H1 (cell line): ENCODE measurements at regions of chr16 and their contacts with region 1.

Region 1: DNA sequence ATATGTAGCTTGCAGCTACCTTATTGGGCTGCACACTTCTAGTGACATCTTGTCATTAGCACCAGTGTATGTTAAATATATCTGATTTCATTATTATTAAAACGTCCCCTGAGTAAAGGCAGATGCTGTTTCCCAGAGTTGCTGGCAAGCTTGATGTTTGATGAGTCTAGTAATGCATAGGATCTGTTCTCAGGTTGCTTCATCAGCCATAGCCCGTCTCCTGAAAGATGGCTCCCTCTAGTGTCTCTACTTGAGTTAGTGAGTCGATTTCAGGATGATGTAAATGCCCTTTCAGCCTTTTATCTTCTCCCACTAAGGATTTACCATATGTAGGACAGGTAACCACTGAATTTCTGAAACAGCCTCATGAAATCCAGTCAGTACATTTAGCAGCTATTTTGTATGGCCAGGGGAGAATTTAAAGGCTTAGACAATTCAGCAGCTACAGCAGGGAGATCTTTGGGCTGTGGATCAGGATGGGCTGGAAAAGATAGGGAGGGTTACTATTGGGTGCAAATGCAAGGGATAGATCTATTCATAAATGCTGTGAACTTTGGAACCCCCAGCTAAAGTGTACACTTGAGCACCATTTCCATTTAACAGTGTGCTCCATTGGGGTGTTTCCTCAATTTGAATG is 376.3 kb downstream of the CNTNAP4 start:
- DNase-seq: no peak
- H3K4me3 ChIP-seq: no peak overlapping the region
- H3K27ac ChIP-seq: no peak overlapping the region
- H3K4me1 ChIP-seq: no peaks in the 10 kb centered on the region
- H3K27me3 ChIP-seq: no peaks in the 10 kb centered on the region
- CTCF ChIP-seq: peak in 2 of 3 experiments; percentile 71 to 83; a peak in 3 of 4 replicates
- EP300 ChIP-seq: no peak
- POLR2A ChIP-seq: no peak
- RAD21 ChIP-seq: peak; percentile 93

Region 2: GRCh38 chr16:75801307-75801706 is 852.2 kb before region 1 on chr16:
- CTCF ChIA-PET with region 1: interaction called, 12 read pairs
- POLR2A ChIA-PET with region 1: no interaction called
- DNase-seq: no peak
- H3K4me3 ChIP-seq: no peak overlapping the region
- H3K27ac ChIP-seq: no peak overlapping the region
- H3K4me1 ChIP-seq: no peaks in the 10 kb centered on the region
- H3K27me3 ChIP-seq: peaks cover 0 to 2% (median 0%) of the 10 kb centered on the region in 4 experiments; a peak in 3 of 7 replicates
- CTCF ChIP-seq: no peak
- EP300 ChIP-seq: no peak
- POLR2A ChIP-seq: no peak
- RAD21 ChIP-seq: peak in 1 of 2 experiments; percentile 44; a peak in 3 of 4 replicates

Region 3: DNA sequence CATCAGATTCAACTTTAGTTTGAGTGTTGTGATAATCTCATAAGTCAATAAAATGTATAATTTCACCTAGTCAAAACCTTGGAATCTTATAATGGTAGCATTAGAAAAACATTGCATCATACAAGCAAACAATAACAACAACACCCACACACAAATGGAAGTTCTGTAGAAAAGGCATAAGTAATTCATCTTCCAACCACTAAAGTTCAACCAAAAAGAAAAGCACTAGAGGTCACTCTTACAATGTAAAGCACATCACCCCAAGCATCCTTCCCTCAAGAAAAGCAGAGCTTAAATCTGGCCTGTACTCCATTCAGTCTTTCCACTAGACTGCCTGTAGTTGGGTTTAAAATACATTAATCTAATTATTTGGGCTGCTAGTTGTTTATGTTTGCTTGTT is 374.5 kb before region 1 on chr16:
- CTCF ChIA-PET with region 1: interaction called, 21 read pairs
- POLR2A ChIA-PET with region 1: no interaction called
- DNase-seq: no peak
- H3K4me3 ChIP-seq: no peak overlapping the region
- H3K27ac ChIP-seq: no peak overlapping the region
- H3K4me1 ChIP-seq: peaks cover 0 to 2% (median 0%) of the 10 kb centered on the region in 4 experiments; a peak in 2 of 7 replicates
- H3K27me3 ChIP-seq: peaks cover 0 to 3% (median 0%) of the 10 kb centered on the region in 4 experiments; a peak in 2 of 7 replicates
- CTCF ChIP-seq: peak in 2 of 3 experiments; percentile 55 to 61; a peak in 3 of 4 replicates
- EP300 ChIP-seq: no peak
- POLR2A ChIP-seq: no peak
- RAD21 ChIP-seq: peak; percentile 83

Region 4: DNA sequence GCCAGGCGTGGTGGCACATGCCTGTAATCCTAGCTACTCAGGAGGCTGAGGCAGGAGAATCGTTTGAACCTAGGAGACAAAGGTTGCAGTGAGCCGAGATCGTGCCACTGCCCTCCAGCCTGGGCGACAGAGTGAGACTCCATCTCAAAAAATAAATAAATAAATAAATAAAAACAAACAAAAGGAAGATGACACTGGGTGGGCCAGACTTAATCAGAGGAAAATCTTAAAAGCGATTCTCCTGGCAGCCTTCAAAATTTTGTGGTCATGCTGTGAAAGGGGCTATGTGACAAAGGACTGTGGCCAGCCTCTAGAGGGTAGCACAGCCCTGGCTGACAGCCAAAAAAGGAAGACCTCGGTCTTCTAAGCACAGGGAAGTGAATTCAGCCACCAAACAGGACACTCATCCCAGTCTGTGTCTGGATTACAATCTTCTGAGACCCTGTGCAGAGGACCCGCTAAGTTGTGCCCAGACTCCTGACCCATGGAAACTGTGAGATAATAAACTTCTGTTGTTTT is 14.8 kb after region 1 on chr16:
- CTCF ChIA-PET with region 1: interaction called, 20 read pairs
- POLR2A ChIA-PET with region 1: no interaction called
- DNase-seq: no peak
- H3K4me3 ChIP-seq: no peak overlapping the region
- H3K27ac ChIP-seq: no peak overlapping the region
- H3K4me1 ChIP-seq: no peaks in the 10 kb centered on the region
- H3K27me3 ChIP-seq: no peaks in the 10 kb centered on the region
- CTCF ChIP-seq: peak; percentile 27 to 66 (median 65)
- EP300 ChIP-seq: no peak
- POLR2A ChIP-seq: no peak
- RAD21 ChIP-seq: peak; percentile 86 to 90